ENCODE measurements at regions of chr18 and their contacts with region 1.

Region 1: DNA sequence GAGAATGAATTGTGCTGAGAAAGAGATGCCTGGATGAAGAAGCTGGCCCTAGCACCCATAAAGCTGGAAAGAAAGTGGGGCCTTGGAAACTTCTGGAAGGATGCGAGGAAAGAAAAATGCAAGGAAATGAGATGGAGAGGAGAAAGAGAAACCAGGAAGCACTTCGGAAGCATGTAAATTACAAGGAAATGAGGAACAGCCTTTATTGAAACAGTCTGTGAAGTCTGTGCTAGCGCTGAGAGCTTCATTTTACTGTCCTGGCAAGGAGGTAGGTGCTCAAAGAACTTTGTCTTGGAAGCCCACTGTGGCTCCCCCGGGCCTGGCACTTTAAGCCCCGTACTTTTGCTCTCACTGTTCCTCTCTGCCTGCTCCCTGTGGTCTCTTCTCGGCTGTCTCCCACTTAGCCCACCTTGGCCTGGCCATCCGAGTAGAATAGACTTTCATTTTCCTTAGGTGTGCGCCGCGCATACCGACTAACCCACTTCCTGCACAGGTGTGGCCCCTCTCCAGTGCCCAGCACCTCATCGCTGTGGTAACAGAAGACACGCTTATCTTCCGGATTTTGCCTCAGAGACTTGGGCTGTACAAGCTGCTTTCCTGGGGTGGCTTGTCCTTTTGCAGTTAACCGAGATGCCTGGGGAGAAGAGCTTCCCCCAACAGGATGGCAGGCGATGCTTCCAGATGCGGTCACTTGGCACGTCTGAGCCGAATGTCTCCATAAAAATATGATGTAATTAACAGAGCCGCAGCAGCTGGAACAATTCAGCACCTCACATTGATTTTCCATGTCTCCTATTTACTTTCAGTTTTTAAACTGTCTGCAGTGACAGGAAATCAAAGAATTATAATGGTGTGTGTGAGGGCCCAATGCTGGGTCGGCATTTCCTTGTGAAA is 199.6 kb downstream of the HRH4 start:
- DNase-seq: peak; percentile 56
- ATAC-seq: peak; percentile 41 to 50

Region 2: GRCh38 chr18:24246143-24246542 is 413.9 kb before region 1 on chr18:
- intact Hi-C with region 1: no loop called
- DNase-seq: no peak
- ATAC-seq: no peak

Region 3: GRCh38 chr18:24600076-24600654 is 59.9 kb before region 1 on chr18:
- intact Hi-C with region 1: loop called in 1 of 2 experiments (anchors 10 kb)
- DNase-seq: no peak
- ATAC-seq: no peak

Region 4: DNA sequence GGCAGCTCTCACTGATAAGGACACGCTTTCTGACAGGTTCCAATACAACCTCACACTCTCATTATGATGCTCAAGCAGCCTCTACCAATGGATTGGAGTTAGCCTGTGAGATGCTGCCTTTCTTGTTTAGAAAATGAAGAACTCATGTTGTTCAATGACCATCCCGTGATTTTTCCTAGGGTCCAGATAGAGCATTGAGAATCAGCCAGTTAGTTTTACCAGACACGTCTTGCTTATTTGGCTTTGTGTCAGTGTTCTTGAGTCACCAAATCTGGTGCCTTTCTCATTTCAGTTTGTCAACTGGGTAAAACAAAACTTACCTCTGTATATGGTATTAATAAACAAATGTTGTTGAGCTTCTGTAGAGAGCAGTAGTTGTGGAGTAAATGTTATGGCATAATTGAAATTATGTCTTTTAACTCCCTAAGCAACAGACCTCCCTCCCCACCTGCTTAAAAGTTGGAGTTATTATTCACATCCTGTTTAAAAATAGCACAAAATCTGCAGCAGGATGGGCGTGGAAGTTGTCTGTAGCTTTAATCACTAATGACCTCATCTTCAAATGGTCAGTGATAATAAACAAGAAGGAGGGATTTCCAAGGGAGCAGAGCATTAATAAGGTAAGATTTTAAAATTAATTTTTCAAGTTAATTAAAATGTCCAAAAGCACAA is 32.3 kb before region 1 on chr18:
- intact Hi-C with region 1: loop called in 1 of 2 experiments (anchors 5 kb)
- DNase-seq: no peak
- ATAC-seq: peak in 1 of 2 donors; percentile 55

Region 5: GRCh38 chr18:24947521-24948305 is 287.6 kb after region 1 on chr18:
- intact Hi-C with region 1: no loop called
- DNase-seq: no peak
- ATAC-seq: peak in 1 of 2 donors; percentile 63

Measured in left cardiac atrium (tissue), 4 donors.